T-cell (primary cell): ENCODE measurements at regions of chr12 and their contacts with region 1.

Region 1: GRCh38 chr12:121383601-121384021 is 16.3 kb upstream of the RNF34 start:
- DNase-seq: no peak
- ATAC-seq: no peak
- H3K4me3 ChIP-seq: no peak overlapping the region
- H3K4me3 Mint-ChIP-seq: no peak overlapping the region
- H3K27ac ChIP-seq: no peak overlapping the region
- H3K27ac Mint-ChIP-seq: no peak overlapping the region
- H3K4me1 ChIP-seq: no peaks in the 10 kb centered on the region
- H3K4me1 Mint-ChIP-seq: no peaks in the 10 kb centered on the region
- H3K27me3 ChIP-seq: peaks cover 0 to 5% of the 10 kb centered on the region in 2 experiments
- H3K27me3 Mint-ChIP-seq: peaks cover 0 to 3% of the 10 kb centered on the region in 2 donors

Region 2: DNA sequence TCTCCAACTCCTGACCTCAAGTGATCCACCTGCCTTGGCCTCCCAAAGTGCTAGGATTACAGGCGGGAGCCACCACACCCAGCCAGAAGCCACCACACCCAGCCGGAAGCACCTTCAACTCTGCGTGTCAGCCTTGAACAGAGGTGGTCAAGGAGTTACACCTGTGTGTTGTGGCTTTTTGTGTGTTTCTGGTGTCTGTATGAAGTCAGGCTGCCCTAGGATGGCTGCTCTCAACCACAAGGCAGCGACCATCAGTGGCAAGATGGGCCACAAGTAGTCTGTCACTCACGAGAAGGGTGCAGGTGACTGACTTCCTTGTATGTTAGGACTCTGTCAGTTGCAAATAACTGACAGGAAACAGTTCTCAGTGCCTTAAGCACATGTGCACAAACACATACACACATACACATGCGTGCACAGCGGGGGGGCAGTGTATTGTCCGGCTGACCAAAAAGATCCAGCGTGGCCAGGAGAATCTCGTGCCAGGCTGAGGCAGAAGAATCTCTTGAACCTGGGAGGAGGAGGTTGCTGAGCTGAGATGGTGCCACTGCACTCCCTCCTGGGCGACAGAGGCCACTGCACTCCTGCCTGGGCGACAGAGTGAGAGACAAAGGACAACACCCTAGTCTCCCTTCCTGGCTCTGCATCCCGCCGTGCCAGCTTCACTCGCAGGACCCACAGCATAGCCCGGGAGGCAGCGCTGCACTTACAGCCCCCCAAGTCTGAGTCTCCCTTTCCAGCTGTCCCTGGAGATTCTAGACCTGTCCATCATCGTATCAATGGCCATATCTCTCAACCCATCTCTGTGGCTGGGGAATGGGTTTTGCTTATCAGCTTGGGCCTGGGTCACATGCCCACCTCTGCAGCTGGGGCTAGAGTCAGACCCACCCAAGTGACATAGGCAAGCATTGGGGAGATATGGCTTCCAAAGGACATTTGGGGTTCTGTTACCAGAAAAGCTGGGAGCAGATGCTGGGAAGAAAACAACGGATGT is 160.0 kb before region 1 on chr12:
- CTCF ChIA-PET with region 1: no interaction called
- POLR2A ChIA-PET with region 1: no interaction called
- DNase-seq: peak in 25 of 35 experiments; percentile 9 to 64 (median 29)
- ATAC-seq: peak; percentile 52 to 69 (median 63)
- H3K4me3 ChIP-seq: peak overlapping the region in 1 of 2 donors; percentile 25
- H3K4me3 Mint-ChIP-seq: peak overlapping the region; percentile 34 to 79 (median 59)
- H3K27ac ChIP-seq: peak overlapping the region; percentile 79
- H3K27ac Mint-ChIP-seq: peak overlapping the region; percentile 94 to 98
- H3K4me1 ChIP-seq: peaks cover 24 to 54% of the 10 kb centered on the region in 2 experiments
- H3K4me1 Mint-ChIP-seq: peaks cover 48 to 62% (median 56%) of the 10 kb centered on the region in 3 donors
- H3K27me3 ChIP-seq: no peaks in the 10 kb centered on the region
- H3K27me3 Mint-ChIP-seq: no peaks in the 10 kb centered on the region

Region 3: DNA sequence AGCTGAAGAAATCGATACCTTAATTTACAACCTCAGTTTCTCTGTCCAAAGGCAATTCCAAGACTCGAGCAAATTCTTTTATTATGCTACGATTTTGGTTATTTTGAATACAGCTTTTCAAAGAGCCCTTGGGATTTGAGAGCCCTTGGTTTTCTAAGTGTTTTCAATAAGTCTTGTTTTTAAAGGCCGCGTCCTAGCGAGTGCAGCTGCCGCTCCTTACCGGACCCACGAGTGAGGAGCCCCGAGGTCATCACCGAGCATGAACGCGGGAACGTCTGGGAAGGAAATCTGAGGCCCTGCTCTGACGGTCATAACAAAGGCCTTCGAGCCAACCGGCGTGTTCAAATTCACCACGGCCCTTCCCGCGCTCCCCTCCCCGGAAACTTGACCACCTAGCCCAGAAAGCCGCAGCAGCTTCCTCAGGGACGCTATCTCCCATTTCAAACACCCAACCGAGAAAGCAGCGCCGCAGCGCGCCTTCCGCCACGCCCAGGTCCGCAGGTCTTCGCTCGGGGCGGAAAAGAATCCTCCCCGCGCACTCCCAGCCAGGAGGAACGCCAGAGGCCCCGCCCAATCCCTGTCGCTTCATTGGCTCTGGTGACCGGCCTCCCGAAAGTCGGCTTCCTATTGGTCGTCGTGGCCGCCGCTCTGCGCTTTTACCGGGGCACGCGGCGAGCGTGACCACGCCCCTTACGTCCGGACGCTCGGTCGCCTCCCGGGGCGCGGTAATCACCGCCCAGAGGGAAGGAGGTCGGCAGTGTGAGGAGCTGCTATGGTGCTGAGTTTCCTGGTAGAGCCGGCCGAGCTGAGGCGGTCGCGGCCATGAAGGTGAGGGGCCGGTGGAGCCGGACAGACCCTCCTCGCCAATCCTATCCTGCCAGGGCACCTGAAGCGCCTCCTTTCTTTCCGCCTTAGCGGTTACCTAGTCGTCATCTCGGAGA is 16.1 kb after region 1 on chr12 and contains the start of gene RNF34:
- CTCF ChIA-PET with region 1: interaction called in 1 of 2 experiments, 6 read pairs
- POLR2A ChIA-PET with region 1: interaction called in 1 of 2 experiments, 10 read pairs
- DNase-seq: peak; percentile 94 to 99 (median 98)
- ATAC-seq: peak; percentile 91 to 93 (median 92)
- H3K4me3 ChIP-seq: peak within 1 kb of the TSS; percentile 81
- H3K4me3 Mint-ChIP-seq: peak within 1 kb of the TSS; percentile 87 to 90 (median 89)
- H3K27ac ChIP-seq: peak within 1 kb of the TSS; percentile 82
- H3K27ac Mint-ChIP-seq: peak within 1 kb of the TSS; percentile 94 to 96
- H3K4me1 ChIP-seq: peaks cover 15 to 24% of the 10 kb centered on the region in 2 experiments
- H3K4me1 Mint-ChIP-seq: peaks cover 41 to 53% (median 49%) of the 10 kb centered on the region in 3 donors
- H3K27me3 ChIP-seq: no peaks in the 10 kb centered on the region
- H3K27me3 Mint-ChIP-seq: no peaks in the 10 kb centered on the region
- total RNA-seq, gene RNF34: 71.8 to 94.5 (median 80.8) TPM

Region 4: DNA sequence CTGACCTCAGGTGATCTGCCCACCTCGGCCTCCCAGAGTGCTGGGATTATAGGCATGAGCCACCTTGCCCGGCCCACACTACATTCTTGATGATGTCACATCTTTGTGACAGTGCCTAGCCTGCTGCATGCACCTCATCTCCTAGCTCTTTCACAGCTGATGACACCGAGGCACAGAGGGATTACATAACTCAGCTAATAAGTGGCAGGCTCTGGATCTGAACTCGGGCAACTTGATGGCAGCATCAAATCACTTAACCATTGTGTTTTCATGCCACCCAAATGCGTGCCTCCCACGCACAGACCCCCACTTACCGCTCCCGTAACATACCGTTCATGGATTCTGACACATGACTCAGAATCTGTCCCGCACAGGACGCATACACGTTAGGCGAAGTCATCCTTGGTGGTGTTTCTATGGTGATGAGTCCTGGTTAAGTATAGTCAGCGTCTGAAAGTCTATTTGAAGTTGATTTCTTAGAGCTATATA is 336.4 kb after region 1 on chr12:
- CTCF ChIA-PET with region 1: no interaction called
- POLR2A ChIA-PET with region 1: interaction called in 1 of 2 experiments, 10 read pairs
- DNase-seq: no peak
- ATAC-seq: no peak
- H3K4me3 ChIP-seq: no peak overlapping the region
- H3K4me3 Mint-ChIP-seq: no peak overlapping the region
- H3K27ac ChIP-seq: no peak overlapping the region
- H3K27ac Mint-ChIP-seq: peak overlapping the region in 1 of 2 donors; percentile 34
- H3K4me1 ChIP-seq: no peaks in the 10 kb centered on the region
- H3K4me1 Mint-ChIP-seq: no peaks in the 10 kb centered on the region
- H3K27me3 ChIP-seq: no peaks in the 10 kb centered on the region
- H3K27me3 Mint-ChIP-seq: no peaks in the 10 kb centered on the region